Panc1 (cell line): ENCODE measurements at regions of chr5 and their contacts with region 1.

Region 1: DNA sequence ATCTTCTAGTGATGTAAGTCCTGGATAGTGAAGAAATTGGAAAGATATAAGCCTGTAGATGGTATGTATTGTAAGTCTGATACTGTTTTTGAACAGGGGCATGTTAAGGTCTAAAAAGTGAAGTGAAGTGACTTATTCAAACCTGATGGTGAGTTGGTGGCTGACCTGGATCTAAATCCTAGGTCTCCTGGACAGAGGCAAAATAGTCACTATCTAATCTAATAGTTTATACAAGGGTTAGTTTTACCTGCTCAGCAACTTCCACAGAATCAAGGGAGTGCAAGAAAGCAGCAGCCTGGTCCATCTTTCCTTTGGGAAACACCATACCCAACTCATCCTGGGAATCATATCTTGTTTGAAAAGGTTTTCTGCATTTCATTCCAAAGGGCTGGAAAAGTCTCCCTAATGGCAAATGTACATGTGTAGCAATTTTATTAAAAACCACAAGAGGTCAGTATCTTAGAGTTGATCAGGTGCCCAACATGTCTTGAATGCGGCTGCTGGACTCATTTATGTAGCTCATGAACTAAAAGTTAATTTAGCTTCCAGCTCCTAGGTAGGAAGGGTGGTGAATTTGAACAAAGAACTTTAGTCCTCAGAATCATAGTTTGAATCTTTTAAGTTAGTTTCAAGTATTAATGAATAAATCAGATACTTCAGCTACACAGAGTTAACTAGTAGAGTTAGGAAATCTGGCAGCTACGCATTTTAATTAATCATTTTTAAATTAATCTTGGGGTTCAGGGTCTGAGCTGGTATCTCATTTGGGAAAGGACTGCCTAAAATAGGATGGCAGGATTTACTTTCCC is 26.0 kb downstream of the SKP2 start:
- DNase-seq: peak; percentile 17
- ATAC-seq: peak; percentile 85
- H3K4me3 ChIP-seq: no peak overlapping the region
- H3K27ac ChIP-seq: no peak overlapping the region
- H3K4me1 ChIP-seq: no peaks in the 10 kb centered on the region
- H3K27me3 ChIP-seq: no peaks in the 10 kb centered on the region
- CTCF ChIP-seq: peak; percentile 71

Region 2: DNA sequence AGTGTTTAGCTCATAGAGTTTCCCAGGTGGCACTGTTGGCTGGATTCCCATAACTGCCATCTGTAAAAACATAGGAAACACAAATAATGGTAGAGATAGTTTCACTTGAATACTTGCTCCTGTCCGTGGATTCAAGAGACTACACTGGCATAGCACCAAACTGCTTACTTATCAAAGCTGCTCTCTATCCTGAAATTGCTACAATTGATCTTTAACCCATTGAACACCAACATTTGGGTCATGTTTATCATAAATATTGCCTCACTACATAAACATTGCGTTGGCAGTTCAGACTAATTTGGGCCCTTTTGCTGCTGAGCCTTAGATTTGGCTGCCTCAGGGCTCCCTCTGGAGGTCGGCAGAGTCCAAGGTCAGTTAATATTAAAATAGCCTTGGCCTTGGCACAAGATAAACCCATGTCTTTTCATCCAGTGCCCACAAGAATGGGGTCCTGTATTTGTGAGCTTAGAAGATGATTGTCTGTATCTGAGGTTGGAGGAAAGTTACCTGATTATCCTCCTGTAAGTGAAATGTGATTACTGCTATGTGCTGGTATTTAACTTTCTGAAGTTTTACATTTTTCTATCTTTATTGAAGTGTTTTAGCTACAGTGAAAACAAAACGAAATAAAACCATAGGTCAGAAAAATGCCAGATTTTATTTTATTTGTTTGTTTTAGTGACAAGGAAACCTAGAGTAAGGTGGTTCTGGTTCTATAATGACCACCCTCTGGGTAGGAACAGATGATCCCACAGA is 127.8 kb after region 1 on chr5:
- CTCF ChIA-PET with region 1: no interaction called
- POLR2A ChIA-PET with region 1: no interaction called
- in situ Hi-C with region 1: no loop called
- intact Hi-C with region 1: loop called (anchors 10 kb)
- DNase-seq: peak; percentile 38
- ATAC-seq: peak; percentile 85
- H3K4me3 ChIP-seq: no peak overlapping the region
- H3K27ac ChIP-seq: no peak overlapping the region
- H3K4me1 ChIP-seq: no peaks in the 10 kb centered on the region; the same call in 1 of the 2 replicates
- H3K27me3 ChIP-seq: no peaks in the 10 kb centered on the region; the same call in none of the 2 replicates
- CTCF ChIP-seq: peak; percentile 87